ENCODE measurements at regions of chr3 and their contacts with region 1.

Region 1: GRCh38 chr3:49454458-49454857 is 15.6 kb upstream of the DAG1 start:
- DNase-seq: no peak
- H3K4me3 Mint-ChIP-seq: no peak overlapping the region
- H3K27ac Mint-ChIP-seq: no peak overlapping the region
- H3K4me1 Mint-ChIP-seq: no peaks in the 10 kb centered on the region
- H3K27me3 Mint-ChIP-seq: no peaks in the 10 kb centered on the region

Region 2: GRCh38 chr3:49171119-49171774 is 283.2 kb before region 1 on chr3 and contains the start of gene KLHDC8B:
- intact Hi-C with region 1: loop called (anchors 1 kb)
- DNase-seq: peak; percentile 68
- H3K4me3 Mint-ChIP-seq: peak within 1 kb of the TSS; percentile 88
- H3K27ac Mint-ChIP-seq: peak within 1 kb of the TSS; percentile 63
- H3K4me1 Mint-ChIP-seq: peaks cover 6% of the 10 kb centered on the region
- H3K27me3 Mint-ChIP-seq: no peaks in the 10 kb centered on the region
- total RNA-seq, gene KLHDC8B: 2.6 and 2.9 TPM in 2 replicates

Region 3: DNA sequence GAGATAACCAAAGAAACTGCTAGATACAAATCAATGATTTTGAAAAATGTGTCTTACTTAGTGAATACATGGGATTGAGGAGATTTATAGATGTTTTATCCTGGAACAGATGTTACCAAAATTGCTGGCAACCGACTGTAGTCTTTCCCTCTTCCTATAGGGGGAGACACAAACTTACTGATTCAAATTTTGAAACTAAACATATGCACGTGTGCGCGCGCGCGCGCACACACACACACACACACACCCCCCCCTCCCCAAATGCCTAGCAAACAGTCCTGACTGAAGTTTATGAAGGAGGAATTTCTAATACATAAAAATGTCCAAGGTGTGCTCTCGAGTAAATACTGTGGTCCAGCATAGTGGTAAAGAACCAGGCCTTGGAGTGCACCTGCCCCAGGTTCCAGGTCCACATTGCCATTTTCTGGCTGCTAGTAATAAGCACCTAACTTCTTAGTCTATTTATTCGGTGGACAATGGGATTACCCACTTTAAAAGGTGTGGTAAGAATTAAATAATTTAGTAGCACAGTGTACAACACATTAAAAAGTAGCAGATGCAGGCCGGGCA is 158.9 kb before region 1 on chr3:
- intact Hi-C with region 1: loop called (anchors 1 kb)
- DNase-seq: peak; percentile 9
- H3K4me3 Mint-ChIP-seq: no peak overlapping the region
- H3K27ac Mint-ChIP-seq: no peak overlapping the region
- H3K4me1 Mint-ChIP-seq: peaks cover 3% of the 10 kb centered on the region
- H3K27me3 Mint-ChIP-seq: no peaks in the 10 kb centered on the region

Region 4: DNA sequence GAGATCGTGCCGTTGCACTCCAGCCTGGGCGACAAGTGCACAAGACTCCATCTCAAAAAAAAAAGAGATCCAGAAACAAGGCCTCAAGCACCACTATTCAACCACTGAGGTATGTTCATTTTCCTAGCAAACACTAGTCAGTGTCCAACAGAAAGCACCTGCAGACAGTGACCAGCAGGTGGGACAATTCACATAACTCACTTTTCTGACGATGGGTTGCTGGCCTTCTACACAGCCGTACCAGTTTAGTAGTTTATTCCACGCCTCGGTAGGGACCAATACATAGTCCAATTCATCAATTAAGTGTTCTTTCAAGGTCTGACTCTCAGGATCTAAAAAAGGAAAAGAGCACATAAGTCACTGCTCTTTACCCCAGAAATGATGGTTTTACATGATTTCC is 127.0 kb before region 1 on chr3:
- intact Hi-C with region 1: loop called (anchors 1 kb)
- DNase-seq: no peak
- H3K4me3 Mint-ChIP-seq: no peak overlapping the region
- H3K27ac Mint-ChIP-seq: no peak overlapping the region
- H3K4me1 Mint-ChIP-seq: no peaks in the 10 kb centered on the region
- H3K27me3 Mint-ChIP-seq: no peaks in the 10 kb centered on the region

Region 5: DNA sequence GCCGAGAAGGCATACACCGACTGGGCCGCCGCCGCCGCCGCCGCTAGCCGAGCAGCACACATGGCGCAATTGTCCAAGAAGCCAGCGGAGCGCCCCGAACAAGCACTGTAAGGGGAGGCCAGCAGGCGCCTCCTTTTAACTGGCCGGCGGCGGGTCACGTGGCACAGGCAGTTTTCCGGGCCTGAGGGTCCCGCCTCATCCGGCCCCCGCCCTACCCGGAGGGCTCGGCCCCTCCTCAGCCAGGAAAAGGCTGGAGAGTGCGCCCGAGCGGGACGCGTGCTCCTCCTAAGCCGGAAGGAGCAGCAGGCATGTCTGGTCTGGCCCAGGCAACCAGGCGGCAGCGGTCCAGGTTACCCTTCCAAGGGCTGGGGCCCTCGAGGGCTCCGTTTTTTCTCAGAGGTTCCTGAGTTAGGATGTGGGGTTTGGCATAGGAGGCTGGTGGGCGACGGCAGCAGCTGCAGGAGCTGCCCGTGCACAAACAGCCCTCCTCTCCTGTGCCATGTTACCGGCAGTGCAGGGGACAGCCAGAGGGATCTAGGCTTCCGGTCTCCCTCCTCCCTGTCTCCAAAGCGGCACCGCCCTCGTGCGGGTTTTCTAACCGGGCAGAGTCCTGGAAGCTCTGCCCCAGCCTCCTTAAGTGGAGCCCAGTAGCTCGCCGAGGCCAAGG is 96.1 kb before region 1 on chr3 and contains the start of gene GPX1:
- intact Hi-C with region 1: loop called (anchors 1 kb)
- DNase-seq: peak; percentile 83
- H3K4me3 Mint-ChIP-seq: peak within 1 kb of the TSS; percentile 94
- H3K27ac Mint-ChIP-seq: peak within 1 kb of the TSS; percentile 90
- H3K4me1 Mint-ChIP-seq: peaks cover 27% of the 10 kb centered on the region
- H3K27me3 Mint-ChIP-seq: no peaks in the 10 kb centered on the region
- total RNA-seq, gene GPX1: 181 and 188 TPM in 2 replicates

Region 6: GRCh38 chr3:49428697-49429100 is 25.8 kb before region 1 on chr3:
- intact Hi-C with region 1: loop called (anchors 1 kb)
- DNase-seq: no peak
- H3K4me3 Mint-ChIP-seq: peak overlapping the region; percentile 96
- H3K27ac Mint-ChIP-seq: peak overlapping the region; percentile 94
- H3K4me1 Mint-ChIP-seq: peaks cover 23% of the 10 kb centered on the region
- H3K27me3 Mint-ChIP-seq: no peaks in the 10 kb centered on the region

Region 7: DNA sequence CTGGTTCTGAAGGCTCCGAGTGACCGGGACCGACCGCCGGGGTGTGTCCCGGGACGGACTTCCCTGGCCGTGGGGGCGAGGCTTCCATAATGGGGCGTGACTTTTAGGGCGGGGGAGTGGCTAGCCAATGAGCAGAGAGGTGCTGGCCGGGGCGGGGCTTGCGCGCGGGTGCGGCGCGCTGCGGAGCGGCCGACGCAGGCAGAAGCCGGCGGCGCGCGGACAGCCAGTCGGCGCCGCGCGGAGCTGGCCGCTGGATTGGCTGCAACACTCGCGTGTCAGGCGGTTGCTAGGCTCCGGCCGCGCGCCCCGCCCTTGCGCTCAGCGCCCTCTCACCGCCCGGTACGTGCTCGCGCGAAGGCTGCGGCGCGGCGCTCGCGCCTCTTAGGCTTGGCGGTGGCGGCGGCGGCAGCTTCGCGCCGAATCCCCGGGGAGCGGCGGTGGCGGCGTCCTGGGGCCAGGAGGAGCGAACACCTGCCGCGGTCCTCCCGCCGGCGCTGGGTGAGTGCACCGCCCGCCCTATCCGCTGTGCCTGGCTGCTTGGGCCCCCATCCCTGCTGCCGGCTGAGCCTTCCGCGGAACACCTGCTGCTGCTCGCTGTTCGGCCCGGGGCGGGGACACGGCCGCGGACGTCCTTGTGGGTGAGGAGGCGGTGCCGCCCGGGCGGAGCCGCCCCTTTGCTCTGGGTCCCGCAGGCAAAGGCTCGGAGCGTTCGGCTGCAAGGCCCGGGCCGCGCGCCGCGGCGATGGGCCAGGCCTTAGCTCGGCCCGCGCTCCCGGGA is 15.7 kb after region 1 on chr3 and contains the start of gene DAG1:
- intact Hi-C with region 1: loop called (anchors 1 kb)
- DNase-seq: peak; percentile 96
- H3K4me3 Mint-ChIP-seq: peak within 1 kb of the TSS; percentile 92
- H3K27ac Mint-ChIP-seq: peak within 1 kb of the TSS; percentile 88
- H3K4me1 Mint-ChIP-seq: peaks cover 23% of the 10 kb centered on the region
- H3K27me3 Mint-ChIP-seq: no peaks in the 10 kb centered on the region
- total RNA-seq, gene DAG1: 20.5 and 23.7 TPM in 2 replicates

Region 8: GRCh38 chr3:49523756-49524747 is 69.6 kb after region 1 on chr3:
- intact Hi-C with region 1: no loop called
- DNase-seq: no peak
- H3K4me3 Mint-ChIP-seq: no peak overlapping the region
- H3K27ac Mint-ChIP-seq: no peak overlapping the region
- H3K4me1 Mint-ChIP-seq: peaks cover 2% of the 10 kb centered on the region
- H3K27me3 Mint-ChIP-seq: no peaks in the 10 kb centered on the region

Region 9: DNA sequence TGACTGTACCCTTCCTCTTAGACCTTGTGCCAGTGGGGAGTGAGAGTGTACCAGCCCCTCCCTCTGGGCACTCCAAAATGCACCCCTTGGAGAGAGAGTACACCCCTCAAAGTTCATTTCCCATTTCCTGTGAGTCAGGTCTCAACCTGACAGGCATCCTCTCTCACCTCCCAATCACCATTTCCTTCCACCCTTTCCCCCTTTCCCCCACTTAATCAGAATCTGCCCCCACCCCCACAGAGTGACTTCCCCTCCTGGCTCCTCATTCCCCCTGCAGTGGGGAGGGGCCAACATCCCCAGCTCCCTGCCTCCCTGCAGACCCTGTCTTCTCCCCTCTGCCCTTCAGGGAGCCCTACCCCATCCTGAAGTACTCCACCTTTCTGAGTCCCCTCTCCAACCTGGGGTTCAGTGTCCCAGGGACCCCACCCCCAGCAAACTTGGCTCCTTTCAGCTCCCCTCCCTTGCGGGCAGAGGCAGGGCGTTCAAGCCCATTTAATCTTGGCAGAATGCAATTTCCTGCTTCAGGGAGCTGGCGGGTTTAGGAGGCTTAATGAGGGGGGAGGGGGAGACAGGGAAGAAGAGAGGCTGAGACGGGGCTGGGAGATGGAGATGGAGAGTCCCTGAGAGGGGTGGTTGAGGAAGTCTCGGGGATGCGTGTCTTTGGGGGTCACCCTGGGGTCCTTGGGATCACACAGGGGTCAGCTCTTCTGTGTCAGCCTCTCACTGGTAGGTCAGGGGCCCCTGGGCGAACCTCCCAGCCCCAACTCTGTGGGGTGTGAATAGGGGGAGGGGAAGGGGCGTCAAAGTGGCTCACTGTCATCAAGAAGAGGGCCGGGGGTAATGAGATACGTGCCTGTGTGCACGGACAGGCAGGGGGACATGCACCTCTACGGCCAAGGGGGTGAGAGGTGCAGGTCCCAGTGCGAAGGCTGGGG is 684.1 kb after region 1 on chr3:
- intact Hi-C with region 1: no loop called
- DNase-seq: no peak
- H3K4me3 Mint-ChIP-seq: no peak overlapping the region
- H3K27ac Mint-ChIP-seq: no peak overlapping the region
- H3K4me1 Mint-ChIP-seq: peaks cover 7% of the 10 kb centered on the region
- H3K27me3 Mint-ChIP-seq: no peaks in the 10 kb centered on the region

Measured in activated T-helper 1 cell treated with anti-CD3 and anti-CD28 coated beads, Interleukin-12 subunit alpha, Interleukin-12 subunit beta, Interleukin-2, Interleukin-4 antibody, amounts not matched to agents 30 ng/mL and 10 ng/mL and 1 ng/mL, durations not matched to agents 14 hours and 24 hours and 36 hours (primary cell).